Activated CD8-positive, alpha-beta T cell treated with anti-CD3 and anti-CD28 coated beads, Interleukin-2, amount 10 ng/mL, durations not matched to agents 7 days and 5 days (primary cell): ENCODE measurements at regions of chr21 and their contacts with region 1.

Region 1: GRCh38 chr21:44892536-44893277 is 19.2 kb upstream of the PTTG1IP start:
- DNase-seq: peak; percentile 86
- ATAC-seq: peak; percentile 86
- H3K4me3 Mint-ChIP-seq: no peak overlapping the region
- H3K27ac Mint-ChIP-seq: peak overlapping the region; percentile 71
- H3K4me1 Mint-ChIP-seq: peaks cover 11% of the 10 kb centered on the region
- H3K27me3 Mint-ChIP-seq: no peaks in the 10 kb centered on the region

Region 2: GRCh38 chr21:44911389-44912157 is 18.9 kb after region 1 on chr21:
- CTCF ChIA-PET with region 1: interaction called, 19 read pairs
- POLR2A ChIA-PET with region 1: interaction called, 3 read pairs
- DNase-seq: peak; percentile 79
- ATAC-seq: peak; percentile 66
- H3K4me3 Mint-ChIP-seq: peak overlapping the region; percentile 73
- H3K27ac Mint-ChIP-seq: peak overlapping the region; percentile 80
- H3K4me1 Mint-ChIP-seq: peaks cover 80% of the 10 kb centered on the region
- H3K27me3 Mint-ChIP-seq: no peaks in the 10 kb centered on the region